CD8-positive, alpha-beta memory T cell (primary cell): ENCODE measurements at regions of chr15 and their contacts with region 1.

Region 1: GRCh38 chr15:48861813-48862431 is 16.0 kb upstream of the EID1 start:
- DNase-seq: peak; percentile 3 to 59 (median 53)
- H3K4me3 ChIP-seq: no peak overlapping the region
- H3K4me3 Mint-ChIP-seq: no peak overlapping the region
- H3K27ac ChIP-seq: no peak overlapping the region
- H3K27ac Mint-ChIP-seq: peak overlapping the region in 1 of 8 donors; percentile 43
- H3K4me1 ChIP-seq: no peaks in the 10 kb centered on the region
- H3K4me1 Mint-ChIP-seq: peaks cover 0 to 5% (median 0%) of the 10 kb centered on the region in 3 donors
- H3K27me3 ChIP-seq: no peaks in the 10 kb centered on the region
- H3K27me3 Mint-ChIP-seq: peaks cover 5 to 7% of the 10 kb centered on the region in 2 donors

Region 2: GRCh38 chr15:48810414-48811317 is 51.3 kb before region 1 on chr15 and contains the start of gene CEP152:
- CTCF ChIA-PET with region 1: no interaction called
- POLR2A ChIA-PET with region 1: no interaction called
- DNase-seq: peak; percentile 97 to 99 (median 98)
- H3K4me3 ChIP-seq: peak within 1 kb of the TSS; percentile 84
- H3K4me3 Mint-ChIP-seq: peak within 1 kb of the TSS; percentile 89 to 98 (median 93)
- H3K27ac ChIP-seq: peak within 1 kb of the TSS; percentile 69
- H3K27ac Mint-ChIP-seq: peak within 1 kb of the TSS; percentile 70 to 97 (median 90)
- H3K4me1 ChIP-seq: peaks cover 14% of the 10 kb centered on the region
- H3K4me1 Mint-ChIP-seq: peaks cover 15 to 38% (median 34%) of the 10 kb centered on the region in 3 donors
- H3K27me3 ChIP-seq: no peaks in the 10 kb centered on the region
- H3K27me3 Mint-ChIP-seq: peaks cover 5% of the 10 kb centered on the region in 2 donors
- total RNA-seq, gene CEP152: 19.7 to 20.7 TPM

Region 3: GRCh38 chr15:48877630-48878595 is 16.0 kb after region 1 on chr15 and contains the start of gene EID1:
- CTCF ChIA-PET with region 1: interaction called, 11 read pairs
- POLR2A ChIA-PET with region 1: no interaction called
- DNase-seq: peak; percentile 89 to 94 (median 92)
- H3K4me3 ChIP-seq: peak within 1 kb of the TSS; percentile 88
- H3K4me3 Mint-ChIP-seq: peak within 1 kb of the TSS; percentile 96 to 100 (median 99)
- H3K27ac ChIP-seq: peak within 1 kb of the TSS; percentile 84
- H3K27ac Mint-ChIP-seq: peak within 1 kb of the TSS; percentile 92 to 100 (median 98)
- H3K4me1 ChIP-seq: peaks cover 13% of the 10 kb centered on the region
- H3K4me1 Mint-ChIP-seq: peaks cover 24 to 33% (median 32%) of the 10 kb centered on the region in 3 donors
- H3K27me3 ChIP-seq: no peaks in the 10 kb centered on the region
- H3K27me3 Mint-ChIP-seq: peaks cover 13 to 14% of the 10 kb centered on the region in 2 donors
- total RNA-seq, gene EID1: 113 to 125 TPM

Region 4: DNA sequence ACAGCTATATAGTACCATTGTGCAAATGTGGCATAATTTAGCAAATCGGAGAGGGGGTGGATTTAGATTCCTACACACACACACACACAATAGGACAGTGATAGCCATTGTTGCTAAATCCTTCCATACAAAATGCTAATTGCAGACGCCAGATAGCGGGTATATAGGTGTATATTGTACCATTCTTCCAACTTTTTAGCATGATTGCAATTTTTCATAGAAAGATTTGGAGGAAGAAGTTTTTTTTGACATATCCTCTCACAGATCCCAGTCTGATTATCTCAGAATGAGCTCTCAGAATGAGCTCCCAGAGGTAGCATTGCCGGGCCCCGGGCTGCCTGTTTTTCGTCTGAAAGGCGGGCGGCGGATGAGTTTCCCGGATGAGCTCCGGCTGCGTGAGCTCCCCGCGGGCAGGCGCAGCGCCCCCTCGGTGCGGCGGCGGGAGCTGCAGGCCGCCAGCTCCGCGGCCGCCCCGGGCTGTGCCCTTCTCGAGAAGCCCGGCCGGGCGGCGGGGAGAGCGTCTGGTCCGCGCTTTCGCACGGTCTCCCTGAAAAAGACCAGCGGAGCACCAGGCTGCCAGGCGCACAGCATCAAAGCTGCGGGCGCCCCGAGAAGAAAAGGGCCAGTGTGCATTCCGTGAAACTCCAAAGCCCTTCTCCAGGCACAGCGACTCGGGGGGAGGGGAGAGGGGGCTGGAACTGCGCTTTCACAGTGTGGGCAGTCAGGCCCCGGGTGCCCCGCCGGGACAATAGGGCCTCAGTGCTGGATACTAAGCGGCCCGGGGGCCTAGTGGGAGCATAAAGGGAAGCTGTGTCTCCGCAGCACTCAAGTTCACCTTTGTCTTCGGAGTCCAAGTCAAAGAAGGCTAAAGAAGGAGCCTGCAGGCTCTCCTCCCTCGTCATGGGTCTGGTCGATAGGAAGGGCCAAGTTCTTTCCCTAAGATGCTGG is 113.8 kb after region 1 on chr15:
- CTCF ChIA-PET with region 1: interaction called, 24 read pairs
- POLR2A ChIA-PET with region 1: no interaction called
- DNase-seq: peak; percentile 48 to 73 (median 65)
- H3K4me3 ChIP-seq: peak overlapping the region; percentile 60
- H3K4me3 Mint-ChIP-seq: peak overlapping the region in 6 of 7 donors; percentile 47 to 82 (median 68)
- H3K27ac ChIP-seq: no peak overlapping the region
- H3K27ac Mint-ChIP-seq: no peak overlapping the region
- H3K4me1 ChIP-seq: peaks cover 3% of the 10 kb centered on the region
- H3K4me1 Mint-ChIP-seq: peaks cover 1 to 5% (median 4%) of the 10 kb centered on the region in 3 donors
- H3K27me3 ChIP-seq: peaks cover 8% of the 10 kb centered on the region
- H3K27me3 Mint-ChIP-seq: peaks cover 20 to 46% of the 10 kb centered on the region in 2 donors

Region 5: DNA sequence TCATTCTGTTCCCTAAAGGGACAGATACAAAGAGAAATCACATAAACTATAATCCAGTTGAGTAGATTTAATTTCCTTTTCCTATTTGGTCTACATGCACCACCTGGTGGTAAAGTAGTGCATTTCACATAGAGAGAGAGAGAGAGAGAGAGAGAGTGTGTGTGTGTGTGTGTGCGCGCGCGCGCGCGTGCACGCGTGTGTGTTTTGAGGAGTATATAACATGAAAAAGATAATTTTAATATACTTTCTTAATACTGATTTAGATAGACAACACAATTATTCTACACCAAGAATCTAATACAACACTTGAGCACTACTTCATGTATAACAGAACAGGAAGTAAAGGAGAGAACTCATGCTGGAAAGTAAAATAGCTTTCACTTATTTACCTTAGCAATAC is 560.1 kb after region 1 on chr15:
- CTCF ChIA-PET with region 1: interaction called, 38 read pairs
- POLR2A ChIA-PET with region 1: no interaction called
- DNase-seq: peak in 3 of 5 donors; percentile 43 to 52 (median 43)
- H3K4me3 ChIP-seq: no peak overlapping the region
- H3K4me3 Mint-ChIP-seq: peak overlapping the region in 5 of 7 donors; percentile 2 to 80 (median 53)
- H3K27ac ChIP-seq: no peak overlapping the region
- H3K27ac Mint-ChIP-seq: peak overlapping the region in 4 of 8 donors; percentile 0 to 84 (median 4)
- H3K4me1 ChIP-seq: no peaks in the 10 kb centered on the region
- H3K4me1 Mint-ChIP-seq: peaks cover 0 to 8% (median 5%) of the 10 kb centered on the region in 3 donors
- H3K27me3 ChIP-seq: no peaks in the 10 kb centered on the region
- H3K27me3 Mint-ChIP-seq: peaks cover 0 to 5% of the 10 kb centered on the region in 2 donors

Region 6: GRCh38 chr15:50145451-50145872 is 1283.5 kb after region 1 on chr15:
- CTCF ChIA-PET with region 1: interaction called, 16 read pairs
- POLR2A ChIA-PET with region 1: no interaction called
- DNase-seq: peak in 2 of 5 donors; percentile 30 to 31
- H3K4me3 ChIP-seq: no peak overlapping the region
- H3K4me3 Mint-ChIP-seq: no peak overlapping the region
- H3K27ac ChIP-seq: no peak overlapping the region
- H3K27ac Mint-ChIP-seq: no peak overlapping the region
- H3K4me1 ChIP-seq: no peaks in the 10 kb centered on the region
- H3K4me1 Mint-ChIP-seq: no peaks in the 10 kb centered on the region
- H3K27me3 ChIP-seq: no peaks in the 10 kb centered on the region
- H3K27me3 Mint-ChIP-seq: peaks cover 0 to 1% of the 10 kb centered on the region in 2 donors